Dendritic cell treated with granulocyte-macrophage colony-stimulating factor and Interleukin-4, amounts not matched to agents 40 ng/mL and 50 ng/mL, for 4 days (primary cell): ENCODE measurements at regions of chr22 and their contacts with region 1.

Region 1: GRCh38 chr22:32474635-32475467 is at the start of gene FBXO7:
- H3K4me3 Mint-ChIP-seq: peak within 1 kb of the TSS; percentile 87
- H3K27ac Mint-ChIP-seq: peak within 1 kb of the TSS; percentile 90
- H3K4me1 Mint-ChIP-seq: peaks cover 41% of the 10 kb centered on the region
- H3K27me3 Mint-ChIP-seq: no peaks in the 10 kb centered on the region

Region 2: DNA sequence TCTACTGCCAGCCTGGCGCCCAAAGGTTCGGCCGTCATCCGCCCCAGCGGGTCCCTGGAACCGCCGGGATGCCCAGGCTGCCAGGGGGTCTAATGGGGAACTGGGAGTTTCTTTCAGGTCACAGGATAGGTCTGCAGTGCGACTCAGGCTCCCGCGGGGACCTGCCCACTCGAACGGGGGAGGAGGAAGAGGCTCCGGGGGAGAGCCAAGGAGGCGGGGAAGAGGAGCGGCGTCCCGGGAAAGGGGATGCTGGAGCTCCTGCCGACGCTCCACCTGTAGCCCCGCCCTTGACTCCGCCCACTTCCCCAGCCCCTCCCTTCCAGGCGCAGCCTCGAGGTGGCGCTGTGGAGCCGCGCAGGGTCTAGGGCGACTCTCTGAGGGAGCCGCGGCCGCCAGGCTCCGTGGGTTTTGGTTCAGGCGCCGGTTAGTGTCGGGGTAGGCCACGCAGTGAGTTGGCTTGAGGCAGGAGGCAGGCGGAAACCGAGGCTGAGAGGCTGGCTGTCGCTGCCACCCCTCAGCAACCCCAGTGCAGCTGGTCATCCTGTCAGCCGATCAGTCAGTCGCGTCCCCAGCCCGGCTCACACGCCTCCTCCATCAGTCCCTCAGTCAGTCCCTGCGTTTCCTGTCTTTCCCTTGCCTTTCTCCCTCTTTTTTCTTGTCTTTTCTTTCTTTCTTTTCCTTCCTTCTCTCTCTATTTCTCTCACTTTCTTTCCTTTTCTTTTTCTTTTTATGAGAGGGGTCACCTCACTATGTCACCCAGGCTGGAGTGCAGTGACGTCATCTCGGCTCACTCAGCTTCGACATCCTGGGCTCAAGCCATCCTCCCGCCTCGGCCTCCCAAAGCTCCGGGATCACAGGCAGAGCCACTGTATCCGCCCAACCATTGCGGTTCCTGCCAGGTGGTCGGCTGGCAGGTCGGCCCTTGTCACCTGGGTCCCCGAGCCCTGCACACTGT is 504.1 kb before region 1 on chr22:
- intact Hi-C with region 1: loop called (anchors 10 kb)
- H3K4me3 Mint-ChIP-seq: peak overlapping the region; percentile 71
- H3K27ac Mint-ChIP-seq: peak overlapping the region; percentile 42
- H3K4me1 Mint-ChIP-seq: peaks cover 14% of the 10 kb centered on the region
- H3K27me3 Mint-ChIP-seq: peaks cover 29% of the 10 kb centered on the region

Region 3: DNA sequence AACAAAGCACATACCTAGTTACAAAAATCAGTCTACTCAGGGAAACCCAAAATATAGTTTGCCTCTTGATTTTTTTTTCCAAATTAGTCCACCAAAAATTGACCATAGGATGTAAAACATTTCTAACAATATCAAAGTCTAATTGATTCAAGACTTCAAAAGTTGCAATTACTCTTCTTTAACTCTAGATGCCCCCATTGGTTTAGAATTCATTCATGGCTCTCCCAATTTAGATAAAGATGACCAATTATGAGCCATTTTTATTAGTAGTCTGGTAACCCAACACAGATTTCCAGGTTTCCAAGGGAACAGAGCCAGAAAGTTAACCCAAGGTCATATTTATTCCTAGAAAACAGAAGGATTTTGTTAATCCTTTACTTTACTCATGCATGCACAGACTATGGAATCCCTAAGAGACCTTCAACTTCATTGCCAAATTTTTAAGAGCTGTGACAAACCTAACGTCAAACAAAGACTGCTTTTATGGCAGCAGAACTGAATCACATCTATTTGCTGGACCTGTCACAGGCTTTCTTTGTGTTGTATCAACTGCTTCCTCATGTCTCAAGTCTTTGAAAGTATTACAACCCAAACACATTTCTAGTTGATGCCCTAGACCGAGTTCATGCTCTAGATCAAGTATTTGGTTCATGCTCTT is 371.1 kb before region 1 on chr22:
- intact Hi-C with region 1: loop called (anchors 5 kb)
- H3K4me3 Mint-ChIP-seq: no peak overlapping the region
- H3K27ac Mint-ChIP-seq: no peak overlapping the region
- H3K4me1 Mint-ChIP-seq: no peaks in the 10 kb centered on the region
- H3K27me3 Mint-ChIP-seq: peaks cover 12% of the 10 kb centered on the region

Region 4: DNA sequence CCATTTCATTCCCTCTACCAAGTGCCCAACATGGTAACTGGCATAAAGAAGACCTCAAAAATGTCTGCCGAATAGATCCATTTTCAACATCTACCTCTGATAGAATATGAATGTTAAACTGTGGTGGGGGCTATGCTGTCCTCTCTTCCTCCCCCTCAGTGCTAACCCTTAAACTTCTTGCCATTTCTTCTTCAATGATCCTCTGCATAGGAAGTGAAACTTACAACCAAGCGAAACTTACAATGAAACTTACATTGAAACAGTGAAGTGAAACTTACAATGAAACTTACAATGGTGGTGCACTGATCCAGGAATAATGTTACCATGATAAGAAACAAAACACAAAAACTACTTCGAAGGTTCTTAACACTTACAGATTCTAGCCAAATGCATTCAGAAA is 67.5 kb before region 1 on chr22:
- intact Hi-C with region 1: loop called (anchors 5 kb)
- H3K4me3 Mint-ChIP-seq: peak overlapping the region; percentile 49
- H3K27ac Mint-ChIP-seq: peak overlapping the region; percentile 88
- H3K4me1 Mint-ChIP-seq: peaks cover 33% of the 10 kb centered on the region
- H3K27me3 Mint-ChIP-seq: no peaks in the 10 kb centered on the region